ENCODE measurements at regions of chr14 and their contacts with region 1.

Region 1: DNA sequence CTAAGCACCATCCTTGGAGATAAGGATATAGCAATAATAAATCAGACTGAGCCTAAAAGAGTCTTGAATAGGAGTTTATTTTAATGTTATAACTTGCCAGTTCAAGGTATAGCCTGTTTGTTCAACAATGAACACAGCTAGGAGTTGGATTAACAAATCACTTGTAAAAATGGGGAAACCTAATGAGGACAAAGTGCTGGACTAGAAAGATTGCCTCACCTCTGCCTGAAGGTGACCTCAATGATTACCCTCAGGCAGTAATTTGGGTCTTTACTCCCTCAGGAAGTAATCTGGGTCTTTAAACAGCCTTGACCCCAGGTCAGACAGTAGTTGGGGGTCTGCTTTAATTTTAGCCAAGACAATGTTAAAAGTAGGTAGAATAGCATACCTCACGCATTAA is 35.5 kb upstream of the CDKL1 start:
- DNase-seq: no peak
- H3K4me3 Mint-ChIP-seq: no peak overlapping the region
- H3K27ac Mint-ChIP-seq: no peak overlapping the region
- H3K4me1 Mint-ChIP-seq: no peaks in the 10 kb centered on the region
- H3K27me3 Mint-ChIP-seq: no peaks in the 10 kb centered on the region

Region 2: GRCh38 chr14:50353126-50353525 is 79.0 kb before region 1 on chr14:
- intact Hi-C with region 1: no loop called
- DNase-seq: no peak
- H3K4me3 Mint-ChIP-seq: no peak overlapping the region
- H3K27ac Mint-ChIP-seq: no peak overlapping the region
- H3K4me1 Mint-ChIP-seq: no peaks in the 10 kb centered on the region
- H3K27me3 Mint-ChIP-seq: peaks cover 2% of the 10 kb centered on the region

Region 3: GRCh38 chr14:50363714-50364111 is 68.4 kb before region 1 on chr14:
- intact Hi-C with region 1: loop called (anchors 2 kb)
- DNase-seq: peak; percentile 46
- H3K4me3 Mint-ChIP-seq: peak overlapping the region; percentile 84
- H3K27ac Mint-ChIP-seq: peak overlapping the region; percentile 94
- H3K4me1 Mint-ChIP-seq: peaks cover 27% of the 10 kb centered on the region
- H3K27me3 Mint-ChIP-seq: no peaks in the 10 kb centered on the region

Measured in activated T-helper 1 cell treated with anti-CD3 and anti-CD28 coated beads, Interleukin-12 subunit alpha, Interleukin-12 subunit beta, Interleukin-2, Interleukin-4 antibody, amounts not matched to agents 30 ng/mL and 10 ng/mL and 1 ng/mL, durations not matched to agents 14 hours and 24 hours and 36 hours (primary cell).